ENCODE measurements at regions of chr1 and their contacts with region 1.

Region 1: DNA sequence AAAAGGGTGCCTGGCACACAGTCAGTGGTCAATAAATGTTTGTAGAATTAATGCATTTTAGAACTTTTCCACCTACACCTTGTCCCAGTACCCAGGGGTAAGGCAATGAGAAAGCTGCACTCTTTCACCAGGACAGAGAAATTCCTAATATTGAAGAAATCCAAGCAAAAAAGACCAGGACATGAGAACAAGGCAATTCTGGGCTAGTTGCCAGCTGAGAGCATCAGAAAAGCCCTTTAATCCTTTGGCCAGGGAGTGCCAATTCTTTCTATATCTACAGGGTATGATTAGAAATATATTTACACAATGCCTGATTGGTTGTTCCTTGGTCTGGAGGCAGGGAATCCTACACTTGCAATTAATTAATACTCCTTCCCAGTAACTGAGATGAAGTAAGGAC is 492.4 kb upstream of the NFIA start:
- DNase-seq: no peak
- ATAC-seq: no peak
- H3K4me3 ChIP-seq: no peak overlapping the region
- H3K27ac ChIP-seq: no peak overlapping the region
- H3K4me1 ChIP-seq: no peaks in the 10 kb centered on the region
- H3K27me3 ChIP-seq: no peaks in the 10 kb centered on the region
- CTCF ChIP-seq: no peak
- EP300 ChIP-seq: no peak
- POLR2A ChIP-seq: no peak
- RAD21 ChIP-seq: no peak

Region 2: DNA sequence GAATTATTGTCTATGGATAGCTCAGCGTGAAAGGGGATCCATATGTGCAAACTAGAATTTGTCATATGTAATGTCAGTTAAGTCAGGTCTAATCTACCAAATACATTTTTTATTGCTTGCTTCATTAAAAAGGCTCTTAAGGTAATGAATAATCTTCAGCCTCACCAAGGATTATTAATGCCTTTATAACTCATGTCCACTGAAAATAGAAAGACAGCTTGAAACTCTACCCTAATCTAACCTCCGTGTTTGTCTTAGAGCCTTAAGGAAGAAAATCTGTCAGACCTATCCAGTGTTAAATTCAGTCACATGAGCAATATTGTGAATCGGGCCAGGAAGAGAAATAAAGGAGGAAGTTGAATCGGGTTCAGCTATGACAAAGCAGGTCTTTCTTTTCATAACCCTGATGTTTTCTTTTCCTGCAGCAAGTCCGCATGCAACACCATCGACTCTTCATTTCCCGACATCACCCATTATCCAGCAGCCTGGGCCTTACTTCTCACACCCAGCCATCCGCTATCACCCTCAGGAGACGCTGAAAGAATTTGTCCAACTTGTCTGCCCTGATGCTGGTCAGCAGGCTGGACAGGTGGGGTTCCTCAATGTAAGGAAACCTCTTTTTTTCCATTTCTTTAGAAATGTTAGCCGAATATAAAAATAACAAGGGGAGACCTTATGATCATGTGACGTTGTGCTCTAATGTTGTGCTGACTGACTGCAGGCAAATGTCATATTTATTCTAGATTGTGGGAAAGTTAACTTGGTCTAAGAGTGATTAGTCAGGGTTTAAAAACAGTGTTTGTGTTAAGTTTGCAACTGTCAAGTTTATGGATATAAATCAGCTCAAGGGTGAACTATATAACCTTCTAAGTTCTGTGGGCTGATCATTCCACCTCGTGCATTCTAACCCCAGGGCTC is 814.0 kb after region 1 on chr1:
- CTCF ChIA-PET with region 1: no interaction called
- POLR2A ChIA-PET with region 1: no interaction called
- RAD21 ChIA-PET with region 1: no interaction called
- SMC1A ChIA-PET with region 1: no interaction called
- in situ Hi-C with region 1: no loop called
- intact Hi-C with region 1: loop called (anchors 10 kb)
- DNase-seq: no peak
- ATAC-seq: no peak
- H3K4me3 ChIP-seq: no peak overlapping the region
- H3K27ac ChIP-seq: no peak overlapping the region
- H3K4me1 ChIP-seq: no peaks in the 10 kb centered on the region
- H3K27me3 ChIP-seq: peaks cover 0 to 2% of the 10 kb centered on the region in 2 experiments; a peak in 1 of 4 replicates
- CTCF ChIP-seq: no peak
- EP300 ChIP-seq: no peak
- POLR2A ChIP-seq: no peak
- RAD21 ChIP-seq: no peak